Lower leg skin (tissue), 4 donors: ENCODE measurements at regions of chr2 and their contacts with region 1.

Region 1: DNA sequence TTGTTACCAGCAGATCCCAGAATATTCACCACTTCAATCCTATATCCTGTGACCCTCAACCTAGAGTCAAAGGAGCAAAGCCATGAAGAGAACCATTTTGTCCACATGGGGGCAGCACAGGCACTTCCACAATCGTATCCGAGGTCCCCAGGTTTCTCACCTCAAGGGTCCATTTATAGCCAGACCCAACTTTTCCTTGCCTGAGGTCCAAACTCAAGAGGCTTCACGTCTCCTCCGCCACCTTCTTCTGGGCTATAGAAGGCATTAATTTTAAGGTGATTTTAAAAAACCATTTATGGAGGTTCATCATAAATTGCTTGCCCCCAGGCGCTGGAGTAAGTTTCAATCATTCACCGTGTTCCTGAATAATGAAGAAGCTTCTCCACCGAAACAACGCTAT is 111.6 kb upstream of the NABP1 start:
- DNase-seq: peak in 1 of 2 donors; percentile 58
- H3K4me3 ChIP-seq: no peak overlapping the region
- CTCF ChIP-seq: peak in 1 of 3 donors; percentile 40
- POLR2A ChIP-seq: no peak

Region 2: DNA sequence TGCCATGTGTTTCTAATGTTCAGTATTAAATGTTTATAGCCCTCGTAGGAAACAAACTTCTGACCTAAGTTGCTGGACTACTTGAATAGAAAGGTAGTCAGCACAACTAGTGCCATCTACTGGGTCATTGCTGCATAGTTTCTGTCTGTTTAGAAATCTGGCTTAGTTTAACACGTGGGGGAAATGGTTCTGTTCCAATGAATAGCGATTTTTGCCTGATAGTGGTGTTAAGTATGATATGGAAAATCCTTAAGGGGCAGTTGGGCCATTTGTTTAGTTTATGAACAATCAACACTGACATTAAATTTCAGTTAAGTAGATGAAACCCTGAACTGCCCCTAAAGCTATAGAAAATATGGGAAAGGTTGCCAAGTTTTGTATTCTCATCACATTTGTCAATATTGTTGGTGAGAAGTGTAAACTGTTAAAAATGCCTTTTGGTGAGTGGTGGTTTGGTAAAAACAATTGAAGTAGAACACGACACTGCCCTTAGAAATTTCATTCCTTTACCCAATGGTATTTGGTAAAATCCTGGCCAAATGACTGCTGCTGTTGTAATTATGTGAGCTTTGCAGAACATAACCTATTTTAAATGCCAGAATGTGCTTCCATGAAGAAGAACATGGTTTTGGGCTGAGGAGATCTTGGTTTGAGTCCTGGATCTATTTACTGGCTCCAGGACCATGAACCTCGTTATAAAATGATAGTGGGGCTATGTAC is 124.8 kb after region 1 on chr2:
- intact Hi-C with region 1: loop called (anchors 5 kb)
- DNase-seq: peak in 1 of 2 donors; percentile 71
- H3K4me3 ChIP-seq: no peak overlapping the region
- CTCF ChIP-seq: peak in 1 of 3 donors; percentile 17
- POLR2A ChIP-seq: no peak